Activated T-helper 2 cell treated with anti-CD3 and anti-CD28 coated beads, Interferon-gamma antibody, Interleukin-2, Interleukin-4, amounts not matched to agents 10 μg/mL and 5 μg/mL and 100 μg/mL, durations not matched to agents 14 hours and 24 hours and 36 hours (primary cell): ENCODE measurements at regions of chr17 and their contacts with region 1.

Region 1: GRCh38 chr17:72556944-72557826 is 436.4 kb downstream of the SOX9 start:
- DNase-seq: peak; percentile 55
- H3K4me3 Mint-ChIP-seq: no peak overlapping the region
- H3K27ac Mint-ChIP-seq: no peak overlapping the region
- H3K4me1 Mint-ChIP-seq: no peaks in the 10 kb centered on the region
- H3K27me3 Mint-ChIP-seq: no peaks in the 10 kb centered on the region

Region 2: GRCh38 chr17:73156166-73156840 is 599.1 kb after region 1 on chr17:
- intact Hi-C with region 1: loop called (anchors 2 kb)
- DNase-seq: peak; percentile 48
- H3K4me3 Mint-ChIP-seq: no peak overlapping the region
- H3K27ac Mint-ChIP-seq: no peak overlapping the region
- H3K4me1 Mint-ChIP-seq: peaks cover 14% of the 10 kb centered on the region
- H3K27me3 Mint-ChIP-seq: peaks cover 20% of the 10 kb centered on the region

Region 3: GRCh38 chr17:73255671-73256181 is 698.5 kb after region 1 on chr17:
- intact Hi-C with region 1: loop called (anchors 10 kb)
- DNase-seq: peak; percentile 36
- H3K4me3 Mint-ChIP-seq: no peak overlapping the region
- H3K27ac Mint-ChIP-seq: no peak overlapping the region
- H3K4me1 Mint-ChIP-seq: no peaks in the 10 kb centered on the region
- H3K27me3 Mint-ChIP-seq: no peaks in the 10 kb centered on the region

Region 4: DNA sequence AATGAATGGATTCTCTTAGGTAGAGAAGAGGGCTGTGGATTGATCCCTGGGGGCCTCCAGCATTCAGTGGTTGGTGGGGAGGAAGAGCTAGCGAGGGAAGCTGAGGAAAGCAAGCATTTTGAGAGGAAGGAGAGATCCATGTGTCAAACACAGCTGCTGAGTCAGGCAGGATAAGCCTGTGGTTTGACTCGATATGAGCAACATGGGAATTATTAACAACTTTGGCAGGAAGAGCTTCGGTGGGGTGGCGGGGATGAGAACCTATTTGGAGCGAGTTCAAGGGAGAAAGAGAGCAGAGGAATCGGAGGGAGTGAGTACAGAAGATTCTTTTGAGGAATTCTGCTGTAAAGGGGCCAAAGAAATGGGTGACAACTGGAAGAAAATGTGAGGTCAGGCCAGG is 814.1 kb after region 1 on chr17:
- intact Hi-C with region 1: loop called (anchors 1 kb)
- DNase-seq: no peak
- H3K4me3 Mint-ChIP-seq: no peak overlapping the region
- H3K27ac Mint-ChIP-seq: no peak overlapping the region
- H3K4me1 Mint-ChIP-seq: no peaks in the 10 kb centered on the region
- H3K27me3 Mint-ChIP-seq: peaks cover 9% of the 10 kb centered on the region